ENCODE measurements at regions of chr22 and their contacts with region 1.

Region 1: DNA sequence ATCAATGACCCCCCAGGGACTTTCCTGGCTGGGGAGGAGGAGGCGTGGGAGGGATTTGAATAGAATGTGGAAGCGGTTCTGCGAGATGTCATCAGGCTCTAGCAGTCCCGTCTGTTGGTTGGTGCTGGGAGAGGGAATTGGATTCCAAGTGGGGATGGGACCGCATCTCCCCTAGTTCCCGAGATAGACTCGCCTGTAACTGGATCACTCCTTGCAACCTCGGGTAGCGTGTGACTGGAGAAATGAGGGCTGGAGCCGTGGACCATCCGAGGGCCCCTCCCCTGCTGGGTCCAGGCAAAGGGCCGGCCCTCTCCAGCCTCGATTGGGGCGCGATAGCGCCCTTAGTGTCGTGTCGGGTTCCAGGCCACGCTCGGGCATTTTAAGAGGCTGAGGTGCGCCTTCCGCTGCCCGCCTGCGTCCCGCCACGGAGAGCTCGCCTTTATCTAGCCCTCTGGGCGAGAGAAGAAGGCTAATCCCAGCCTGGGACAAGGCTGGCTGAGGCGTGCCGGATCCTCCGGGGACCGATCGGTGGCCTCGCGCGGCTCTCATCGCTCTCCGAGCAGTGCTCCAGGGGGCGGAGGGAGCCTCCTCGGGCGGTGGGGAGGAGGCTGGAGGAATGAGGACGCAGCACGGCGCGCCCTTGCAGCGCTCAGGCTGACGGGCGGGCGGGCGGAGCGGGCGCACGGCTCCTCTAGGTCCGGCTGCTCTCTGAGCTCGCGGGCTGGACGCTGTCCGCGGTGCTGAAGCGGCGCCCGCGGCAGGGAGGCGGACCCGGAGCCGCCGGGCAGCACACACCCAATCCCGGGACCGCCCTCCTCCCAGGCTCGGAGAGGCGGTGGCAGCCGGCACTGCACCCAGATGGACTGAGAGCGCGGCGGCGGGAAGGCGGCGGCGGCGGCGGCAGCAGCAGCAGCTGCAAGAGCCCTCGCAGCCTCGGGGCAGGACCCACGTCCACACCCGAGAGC is 107.8 kb downstream of the OSBP2 start:
- DNase-seq: peak; percentile 80
- H3K4me3 ChIP-seq: peak overlapping the region; percentile 23
- CTCF ChIP-seq: peak; percentile 20

Region 2: GRCh38 chr22:30843245-30843644 is 40.8 kb after region 1 on chr22:
- in situ Hi-C with region 1: loop called (anchors 5 kb)
- DNase-seq: peak; percentile 86
- H3K4me3 ChIP-seq: no peak overlapping the region
- CTCF ChIP-seq: no peak

Region 3: DNA sequence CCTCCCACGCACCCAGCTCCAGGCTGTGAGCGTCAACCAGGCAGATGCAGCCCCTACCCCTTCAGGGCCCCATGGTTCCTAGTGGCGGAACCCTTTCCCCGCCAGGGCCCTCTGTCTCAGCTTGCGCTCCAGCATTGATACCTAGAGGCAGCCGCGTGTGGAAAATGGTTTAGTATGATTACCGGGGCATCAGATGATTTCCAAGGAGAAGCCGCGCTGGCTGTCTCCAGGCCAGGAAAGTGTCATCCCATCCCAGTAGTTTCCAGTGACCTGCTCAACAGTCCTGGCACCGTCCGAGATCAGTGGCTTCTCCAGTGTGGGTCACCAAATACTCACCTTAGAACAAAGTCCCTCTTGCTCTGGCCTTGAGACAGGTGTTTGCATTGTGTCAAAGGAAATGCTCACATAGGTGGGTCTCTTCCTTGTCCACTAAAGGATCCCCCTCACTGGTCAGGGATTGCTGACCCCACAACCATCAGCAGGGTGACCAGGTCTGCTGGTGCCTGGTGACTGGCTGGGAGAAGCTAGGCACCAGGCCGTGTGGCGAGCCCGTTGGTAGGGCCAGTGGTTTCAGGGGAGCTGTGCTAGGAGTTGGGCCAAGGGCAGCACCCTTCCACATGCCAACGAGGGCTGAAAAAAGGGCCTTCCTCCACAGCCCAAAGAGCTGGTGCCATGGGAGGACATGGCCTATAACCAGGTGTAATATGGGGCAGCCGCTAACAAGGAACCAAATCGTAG is 56.7 kb after region 1 on chr22:
- in situ Hi-C with region 1: no loop called
- DNase-seq: no peak
- H3K4me3 ChIP-seq: no peak overlapping the region
- CTCF ChIP-seq: no peak

Region 4: DNA sequence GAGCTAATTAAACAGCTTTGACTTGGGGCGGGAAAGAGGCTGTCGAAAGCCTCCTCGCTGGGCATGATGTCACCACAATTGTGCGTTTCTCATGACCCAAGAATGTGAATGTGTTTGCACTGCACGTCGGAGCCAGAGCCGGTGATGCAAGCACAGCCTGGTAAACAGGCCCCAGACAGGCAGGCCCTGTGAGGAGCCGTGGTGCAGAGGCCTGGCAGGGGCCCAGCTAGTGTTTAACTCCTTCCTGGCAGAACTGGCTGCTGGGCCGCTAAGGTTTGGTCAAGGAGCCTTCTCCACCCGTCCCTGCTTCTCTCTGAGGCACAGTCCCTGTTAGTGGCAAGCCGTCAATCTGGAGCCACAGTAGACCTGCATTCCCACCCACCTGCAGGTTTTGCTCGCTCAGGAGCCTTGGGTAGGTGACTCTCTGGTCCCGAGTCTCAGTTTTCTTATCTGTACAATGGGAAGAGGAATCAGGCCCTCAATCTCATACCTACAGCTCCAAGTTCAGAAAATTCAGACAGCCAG is 253.2 kb after region 1 on chr22:
- in situ Hi-C with region 1: no loop called
- DNase-seq: peak; percentile 93
- H3K4me3 ChIP-seq: no peak overlapping the region
- CTCF ChIP-seq: no peak